CD8-positive, alpha-beta memory T cell (primary cell): ENCODE measurements at regions of chr11 and their contacts with region 1.

Region 1: DNA sequence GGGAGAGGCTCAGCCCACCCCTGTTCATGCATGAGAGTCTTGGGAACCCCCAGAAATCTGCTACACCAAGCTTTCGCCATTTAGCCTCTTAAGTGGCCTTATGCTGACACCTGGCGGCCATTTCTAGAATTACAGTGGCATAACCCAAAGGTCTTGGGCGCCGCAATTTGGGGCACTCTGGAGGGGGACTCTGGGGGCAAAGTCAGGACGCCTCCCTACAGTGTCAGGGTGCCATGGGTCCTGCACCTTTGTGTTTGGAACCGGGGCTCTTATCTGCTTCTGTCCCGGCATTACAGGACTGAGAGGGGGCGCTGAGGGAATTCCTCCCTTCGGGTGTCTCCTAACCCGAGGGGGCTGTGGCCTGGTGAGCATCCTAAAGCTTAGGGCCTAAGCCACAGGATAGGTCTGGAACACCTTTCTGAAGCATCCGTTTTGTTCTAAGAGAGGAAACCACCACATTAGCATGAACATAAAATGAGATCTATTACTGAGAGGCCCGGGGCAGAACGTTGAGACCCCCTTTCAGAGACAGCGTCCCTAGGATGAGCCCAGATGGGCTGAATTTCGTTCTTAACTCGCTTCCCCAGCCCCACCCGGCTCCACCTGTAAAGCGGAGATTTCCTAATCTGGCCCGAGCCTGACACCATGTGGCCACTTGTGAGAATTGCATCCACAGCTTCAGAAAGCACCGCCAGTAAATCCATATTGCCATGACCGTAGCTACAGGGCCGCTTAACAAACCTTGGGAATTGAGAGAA is 9.3 kb downstream of the INS start:
- DNase-seq: peak; percentile 67 to 86 (median 71)
- H3K4me3 ChIP-seq: peak overlapping the region; percentile 23
- H3K4me3 Mint-ChIP-seq: peak overlapping the region in 6 of 7 donors; percentile 30 to 81 (median 58)
- H3K27ac ChIP-seq: no peak overlapping the region
- H3K27ac Mint-ChIP-seq: peak overlapping the region in 3 of 8 donors; percentile 51 to 79 (median 61)
- H3K4me1 ChIP-seq: peaks cover 6% of the 10 kb centered on the region
- H3K4me1 Mint-ChIP-seq: peaks cover 7 to 8% (median 7%) of the 10 kb centered on the region in 3 donors
- H3K27me3 ChIP-seq: peaks cover 13% of the 10 kb centered on the region
- H3K27me3 Mint-ChIP-seq: peaks cover 24 to 32% of the 10 kb centered on the region in 2 donors

Region 2: DNA sequence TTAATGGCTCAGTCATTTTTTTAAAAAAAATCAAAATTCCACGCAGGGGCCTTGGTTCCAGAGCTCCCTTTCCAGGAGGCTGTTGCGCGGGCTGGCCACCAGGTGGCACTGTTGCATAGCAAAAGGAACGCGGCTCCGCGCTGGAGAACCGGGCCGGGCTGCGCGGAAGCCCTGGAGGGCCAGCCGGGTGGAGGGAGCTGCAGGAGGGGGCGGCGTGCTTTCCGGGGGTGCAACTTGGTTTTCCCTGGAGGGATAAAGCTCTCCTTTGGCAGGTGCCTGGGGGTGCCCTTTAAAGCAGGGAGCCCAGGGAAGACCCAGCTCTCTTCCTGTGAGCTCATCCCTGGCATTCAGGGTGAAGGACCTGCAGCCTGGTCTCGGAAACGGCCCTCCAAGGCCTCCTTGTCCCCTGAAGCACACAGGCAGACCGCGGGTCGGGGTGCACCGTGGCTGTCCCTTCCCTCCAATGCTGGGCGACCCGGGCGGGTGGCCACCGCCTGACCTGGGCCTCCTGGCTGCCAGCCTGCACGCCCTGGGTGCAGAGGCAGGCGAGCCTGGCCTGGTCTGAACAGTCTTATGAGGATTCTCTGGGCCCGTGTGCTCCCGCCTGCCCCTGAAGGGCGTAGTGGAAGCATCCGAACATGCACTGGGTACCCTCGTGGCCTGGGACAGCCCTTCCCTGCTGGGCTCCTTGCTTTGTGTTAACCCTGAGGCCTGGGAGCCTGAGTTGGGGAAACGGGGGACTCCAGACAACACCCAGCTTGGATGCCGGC is 498.7 kb before region 1 on chr11:
- CTCF ChIA-PET with region 1: interaction called, 30 read pairs
- POLR2A ChIA-PET with region 1: no interaction called
- DNase-seq: peak; percentile 65 to 82 (median 71)
- H3K4me3 ChIP-seq: no peak overlapping the region
- H3K4me3 Mint-ChIP-seq: no peak overlapping the region
- H3K27ac ChIP-seq: no peak overlapping the region
- H3K27ac Mint-ChIP-seq: no peak overlapping the region
- H3K4me1 ChIP-seq: no peaks in the 10 kb centered on the region
- H3K4me1 Mint-ChIP-seq: no peaks in the 10 kb centered on the region
- H3K27me3 ChIP-seq: peaks cover 13% of the 10 kb centered on the region
- H3K27me3 Mint-ChIP-seq: peaks cover 15 to 45% of the 10 kb centered on the region in 2 donors

Region 3: DNA sequence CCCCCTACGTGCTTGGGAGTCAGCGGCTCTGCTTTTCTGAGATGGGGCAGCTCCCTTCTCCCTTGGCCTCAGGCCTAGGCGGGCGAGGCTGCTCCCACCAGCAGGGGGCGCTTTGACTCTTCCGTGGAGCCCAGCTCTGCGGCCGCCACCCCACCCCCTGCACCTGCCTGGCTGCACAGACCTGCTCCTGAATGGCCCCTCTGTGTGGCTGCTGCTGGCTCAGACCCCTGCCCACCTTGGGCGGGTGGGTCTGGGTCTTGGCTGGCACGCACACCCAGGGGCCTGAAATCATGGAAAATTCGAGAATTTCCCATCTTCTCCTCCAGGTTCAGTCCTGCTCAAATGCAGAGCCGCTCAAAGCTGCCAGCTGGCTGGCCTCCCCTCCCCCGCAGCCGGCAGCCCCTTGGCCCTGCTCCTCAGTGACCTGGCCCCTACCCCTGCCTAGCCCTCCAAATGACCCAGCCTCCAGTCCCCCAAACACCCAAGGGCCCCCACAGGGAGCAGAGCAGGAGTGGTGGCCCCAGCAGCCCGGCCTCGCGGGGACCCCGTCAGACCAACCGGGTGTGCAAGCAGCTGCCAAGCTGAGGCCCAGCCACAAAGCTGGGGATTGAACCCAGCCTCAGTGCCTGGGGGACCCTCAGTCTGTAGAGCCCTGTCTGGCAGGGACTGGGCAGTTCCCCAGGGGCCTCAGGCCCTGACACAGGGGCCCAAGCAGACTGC is 269.0 kb before region 1 on chr11:
- CTCF ChIA-PET with region 1: interaction called, 16 read pairs
- POLR2A ChIA-PET with region 1: interaction called, 4 read pairs
- DNase-seq: peak; percentile 59 to 83 (median 75)
- H3K4me3 ChIP-seq: no peak overlapping the region
- H3K4me3 Mint-ChIP-seq: no peak overlapping the region
- H3K27ac ChIP-seq: no peak overlapping the region
- H3K27ac Mint-ChIP-seq: peak overlapping the region in 1 of 8 donors; percentile 38
- H3K4me1 ChIP-seq: peaks cover 8% of the 10 kb centered on the region
- H3K4me1 Mint-ChIP-seq: peaks cover 3 to 33% (median 13%) of the 10 kb centered on the region in 3 donors
- H3K27me3 ChIP-seq: no peaks in the 10 kb centered on the region
- H3K27me3 Mint-ChIP-seq: no peaks in the 10 kb centered on the region

Region 4: GRCh38 chr11:1953489-1954266 is 198.0 kb before region 1 on chr11:
- CTCF ChIA-PET with region 1: interaction called, 11 read pairs
- POLR2A ChIA-PET with region 1: no interaction called
- DNase-seq: no peak
- H3K4me3 ChIP-seq: no peak overlapping the region
- H3K4me3 Mint-ChIP-seq: no peak overlapping the region
- H3K27ac ChIP-seq: no peak overlapping the region
- H3K27ac Mint-ChIP-seq: no peak overlapping the region
- H3K4me1 ChIP-seq: no peaks in the 10 kb centered on the region
- H3K4me1 Mint-ChIP-seq: no peaks in the 10 kb centered on the region
- H3K27me3 ChIP-seq: no peaks in the 10 kb centered on the region
- H3K27me3 Mint-ChIP-seq: no peaks in the 10 kb centered on the region

Region 5: DNA sequence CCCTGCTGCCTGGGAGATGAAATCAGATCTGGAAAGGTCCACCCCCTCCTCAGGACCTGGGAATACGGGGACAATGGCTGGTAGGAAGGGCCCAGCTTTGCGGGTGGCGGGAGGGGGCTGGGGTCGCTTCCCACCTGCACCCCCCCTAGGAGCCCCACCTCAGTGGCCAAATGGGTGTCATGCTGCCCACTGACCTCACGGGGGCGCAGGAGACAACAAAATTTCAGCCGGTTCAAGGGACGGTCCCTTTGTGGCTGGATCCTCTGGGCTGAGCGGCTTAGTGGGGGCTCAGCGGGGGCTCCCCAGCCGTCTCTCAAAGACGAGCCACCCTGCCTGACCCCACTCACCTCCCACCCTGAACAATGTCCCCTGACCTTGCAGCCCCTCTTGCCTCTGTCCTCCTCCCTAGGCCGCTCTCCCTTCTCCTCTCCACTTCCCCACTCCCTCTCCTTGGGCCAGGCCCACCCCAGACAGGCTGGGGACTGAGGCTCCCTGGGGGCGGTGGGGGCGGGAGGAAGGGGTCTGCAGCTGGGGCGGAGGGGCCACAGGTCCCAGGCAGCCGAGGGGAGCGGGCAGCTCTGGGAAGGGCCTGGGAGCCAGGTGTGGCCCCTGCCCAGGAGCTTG is 114.7 kb before region 1 on chr11:
- CTCF ChIA-PET with region 1: interaction called, 141 read pairs
- POLR2A ChIA-PET with region 1: interaction called, 4 read pairs
- DNase-seq: no peak
- H3K4me3 ChIP-seq: no peak overlapping the region
- H3K4me3 Mint-ChIP-seq: no peak overlapping the region
- H3K27ac ChIP-seq: no peak overlapping the region
- H3K27ac Mint-ChIP-seq: no peak overlapping the region
- H3K4me1 ChIP-seq: no peaks in the 10 kb centered on the region
- H3K4me1 Mint-ChIP-seq: no peaks in the 10 kb centered on the region
- H3K27me3 ChIP-seq: no peaks in the 10 kb centered on the region
- H3K27me3 Mint-ChIP-seq: no peaks in the 10 kb centered on the region